ENCODE measurements at regions of chr12 and their contacts with region 1.

Region 1: DNA sequence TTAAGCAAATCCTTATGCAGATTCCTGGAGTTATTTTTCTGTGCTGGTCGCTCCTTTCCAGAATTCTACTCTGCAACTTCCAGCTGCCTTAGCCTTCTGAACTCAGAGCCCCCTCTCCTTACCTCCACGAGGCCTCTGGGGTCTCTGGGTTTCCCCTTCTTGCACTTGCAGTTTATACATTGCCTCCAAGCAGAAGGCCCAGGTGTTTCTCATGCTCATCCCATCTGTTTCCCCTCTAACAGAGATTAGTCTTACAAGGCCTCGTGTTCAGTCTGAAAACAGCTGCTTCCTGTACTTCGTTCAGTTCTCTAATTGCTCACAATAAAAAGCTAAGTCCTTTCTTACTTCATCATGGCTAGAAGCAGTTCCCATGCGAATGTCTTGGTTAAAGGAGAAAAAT is 134.4 kb upstream of the FGD4 start:
- DNase-seq: peak; percentile 96
- H3K4me3 ChIP-seq: peak overlapping the region; percentile 56
- H3K27ac ChIP-seq: peak overlapping the region; percentile 99
- H3K4me1 ChIP-seq: peaks cover 95% of the 10 kb centered on the region
- CTCF ChIP-seq: no peak

Region 2: GRCh38 chr12:32062881-32063280 is 202.1 kb before region 1 on chr12:
- CTCF ChIA-PET with region 1: interaction called, 3 read pairs
- POLR2A ChIA-PET with region 1: interaction called, 6 read pairs
- intact Hi-C with region 1: loop called (anchors 2 kb)
- DNase-seq: peak; percentile 48
- H3K4me3 ChIP-seq: no peak overlapping the region
- H3K27ac ChIP-seq: peak overlapping the region; percentile 15
- H3K4me1 ChIP-seq: peaks cover 24% of the 10 kb centered on the region
- CTCF ChIP-seq: peak; percentile 20; the same call in 1 of the 2 replicates

Region 3: DNA sequence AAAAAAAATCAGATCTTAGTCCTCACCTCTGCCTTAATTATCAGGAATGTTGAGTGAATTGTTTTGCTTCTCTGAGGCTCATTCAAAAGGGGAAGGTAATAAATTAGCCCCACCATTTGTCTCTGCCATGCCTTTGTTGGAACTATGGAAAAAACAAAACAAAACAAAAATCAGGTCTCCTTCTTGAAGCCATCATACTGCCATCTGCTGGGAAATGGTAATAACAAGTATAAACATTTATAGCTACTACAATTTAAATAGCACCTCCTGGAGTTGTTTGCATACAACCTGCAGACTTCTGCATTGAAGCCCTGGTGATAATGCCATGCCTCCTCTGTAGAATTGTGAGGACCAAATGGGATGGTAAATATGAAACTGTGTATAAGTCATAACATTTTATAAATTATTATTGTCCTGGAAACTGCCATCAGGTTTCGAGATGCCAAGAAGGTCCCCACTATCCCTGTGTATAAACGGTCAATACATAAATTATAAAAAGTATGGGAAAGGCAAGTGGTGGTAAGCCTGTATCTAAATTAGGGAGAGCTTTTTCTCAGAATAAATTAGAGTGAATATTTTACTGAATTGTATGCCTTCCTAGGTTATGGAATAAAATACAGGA is 47.2 kb after region 1 on chr12:
- CTCF ChIA-PET with region 1: interaction called, 4 read pairs
- POLR2A ChIA-PET with region 1: interaction called, 6 read pairs
- intact Hi-C with region 1: loop called (anchors 1 kb)
- DNase-seq: peak; percentile 82
- H3K4me3 ChIP-seq: no peak overlapping the region
- H3K27ac ChIP-seq: no peak overlapping the region
- H3K4me1 ChIP-seq: peaks cover 12% of the 10 kb centered on the region
- CTCF ChIP-seq: peak; percentile 90

Region 4: DNA sequence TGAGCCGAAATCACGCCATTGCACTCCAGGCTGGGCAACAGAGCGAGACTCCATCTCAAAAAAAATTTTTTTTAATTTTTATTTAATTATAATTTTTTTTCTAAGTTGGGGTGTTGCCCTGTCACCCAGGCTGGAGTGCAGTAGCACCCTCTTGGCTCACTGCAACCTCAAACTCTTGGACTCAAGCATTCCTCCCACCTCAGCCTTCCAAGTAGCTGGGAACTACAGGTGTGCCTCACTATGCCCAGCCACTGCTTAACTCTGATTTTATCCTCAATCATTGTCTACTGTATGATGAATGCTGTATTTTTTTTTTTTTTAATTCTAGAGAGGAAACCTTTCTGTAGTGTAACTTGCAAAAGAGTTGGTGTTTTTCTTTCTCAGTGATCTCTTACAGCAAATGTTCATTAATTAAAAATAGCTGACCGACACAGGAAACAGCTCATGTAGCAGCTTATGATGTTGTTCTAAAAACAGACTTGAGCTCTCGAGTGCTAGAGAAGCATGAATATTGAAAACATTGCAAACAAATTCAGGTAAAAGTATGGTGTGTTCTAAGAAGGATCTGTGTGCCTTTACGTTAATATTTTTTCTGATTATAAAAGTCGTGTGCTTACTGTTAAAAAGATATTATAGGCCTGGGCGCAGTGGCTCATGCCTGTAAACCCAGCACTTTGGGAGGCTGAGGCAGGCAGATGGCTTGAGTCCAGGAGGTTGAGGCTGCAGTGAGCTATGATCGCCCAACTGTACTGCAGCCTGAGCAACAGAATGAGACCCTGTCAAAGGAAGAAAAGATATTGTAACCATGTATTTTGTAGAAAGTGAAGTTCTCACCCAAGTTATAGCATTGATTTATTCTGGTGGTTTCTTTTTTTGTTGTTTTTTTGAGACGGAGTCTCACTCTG is 203.2 kb after region 1 on chr12:
- CTCF ChIA-PET with region 1: no interaction called
- POLR2A ChIA-PET with region 1: interaction called, 3 read pairs
- intact Hi-C with region 1: loop called (anchors 10 kb)
- DNase-seq: peak; percentile 80
- H3K4me3 ChIP-seq: peak overlapping the region; percentile 52
- H3K27ac ChIP-seq: peak overlapping the region; percentile 94
- H3K4me1 ChIP-seq: peaks cover 45% of the 10 kb centered on the region
- CTCF ChIP-seq: no peak

Measured in OCI-LY7 (cell line).